ENCODE measurements at regions of chrX and their contacts with region 1.

Region 1: DNA sequence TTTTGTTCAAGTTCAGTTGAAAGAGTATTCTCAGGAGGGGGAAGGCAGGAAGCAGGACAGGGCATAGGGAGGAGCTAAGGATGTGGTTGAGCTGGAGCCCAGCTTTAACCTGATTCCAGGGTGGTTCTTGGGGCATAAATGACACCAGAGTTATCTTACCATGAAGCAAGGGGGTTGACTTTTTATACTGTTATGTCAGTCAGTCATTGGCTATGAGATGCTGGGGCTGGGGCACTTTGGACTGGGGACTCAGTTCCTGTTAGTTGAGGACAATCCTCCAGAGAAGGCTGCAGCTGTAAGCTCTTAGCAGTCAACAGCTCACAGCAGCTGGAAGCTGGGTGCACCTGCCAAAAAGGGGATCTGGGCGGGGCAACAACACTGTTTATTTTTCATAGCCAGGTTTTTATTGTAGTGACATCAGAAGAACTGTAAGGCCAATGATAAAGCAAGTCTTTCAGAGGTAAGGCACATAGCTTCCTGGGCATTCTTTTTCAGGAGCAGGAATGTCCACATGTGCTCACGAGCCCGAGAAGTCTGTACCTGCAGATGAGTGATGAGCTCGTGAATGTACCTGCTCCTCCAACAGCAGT is 78.5 kb downstream of the MID1IP1 start:
- DNase-seq: no peak
- ATAC-seq: peak; percentile 72
- H3K4me3 ChIP-seq: no peak overlapping the region
- H3K27ac ChIP-seq: peak overlapping the region; percentile 68
- H3K4me1 ChIP-seq: peaks cover 14% of the 10 kb centered on the region
- H3K27me3 ChIP-seq: no peaks in the 10 kb centered on the region
- CTCF ChIP-seq: no peak
- EP300 ChIP-seq: no peak; a peak in 1 of 4 replicates
- POLR2A ChIP-seq: no peak
- RAD21 ChIP-seq: no peak

Region 2: DNA sequence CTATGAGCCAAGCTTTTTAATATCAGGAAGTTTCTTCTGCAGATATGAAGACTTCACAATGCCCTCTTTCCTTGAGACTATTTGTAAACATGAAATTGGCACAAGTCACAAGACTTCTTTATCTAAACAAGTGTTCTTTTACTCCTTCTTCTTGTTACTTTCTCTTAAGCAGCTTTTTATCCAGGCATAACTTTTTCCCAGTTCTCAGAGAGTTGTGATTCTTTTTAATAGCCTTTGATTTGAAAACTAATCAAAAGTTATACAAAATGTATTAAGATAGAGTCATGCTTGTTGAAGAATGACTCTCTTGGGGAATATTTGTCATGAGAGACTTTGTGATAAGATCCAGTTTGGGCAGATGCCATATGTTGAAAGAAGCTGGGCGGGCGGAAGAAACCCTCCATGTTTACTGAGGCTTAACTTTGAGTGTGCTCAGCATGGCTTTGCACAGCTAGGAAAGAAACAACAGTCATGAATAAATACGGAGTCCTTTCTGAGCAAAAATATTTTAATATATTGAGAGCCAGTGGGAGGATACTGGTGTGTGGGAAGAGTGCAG is 834.1 kb before region 1 on chrX:
- CTCF ChIA-PET with region 1: no interaction called
- POLR2A ChIA-PET with region 1: no interaction called
- RAD21 ChIA-PET with region 1: no interaction called
- SMC1A ChIA-PET with region 1: no interaction called
- in situ Hi-C with region 1: no loop called
- intact Hi-C with region 1: no loop called
- DNase-seq: no peak
- ATAC-seq: no peak
- H3K4me3 ChIP-seq: no peak overlapping the region
- H3K27ac ChIP-seq: no peak overlapping the region
- H3K4me1 ChIP-seq: no peaks in the 10 kb centered on the region
- H3K27me3 ChIP-seq: no peaks in the 10 kb centered on the region
- CTCF ChIP-seq: no peak
- EP300 ChIP-seq: no peak
- POLR2A ChIP-seq: no peak
- RAD21 ChIP-seq: no peak

Region 3: GRCh38 chrX:38803586-38804431 is 75.9 kb before region 1 on chrX:
- CTCF ChIA-PET with region 1: interaction called, 10 read pairs
- POLR2A ChIA-PET with region 1: interaction called, 12 read pairs
- RAD21 ChIA-PET with region 1: interaction called, 16 read pairs
- SMC1A ChIA-PET with region 1: interaction called, 39 read pairs
- in situ Hi-C with region 1: no loop called
- intact Hi-C with region 1: loop called (anchors 1 kb)
- DNase-seq: no peak
- ATAC-seq: peak; percentile 78
- H3K4me3 ChIP-seq: peak overlapping the region; percentile 70
- H3K27ac ChIP-seq: peak overlapping the region; percentile 82
- H3K4me1 ChIP-seq: no peaks in the 10 kb centered on the region
- H3K27me3 ChIP-seq: no peaks in the 10 kb centered on the region
- CTCF ChIP-seq: no peak
- EP300 ChIP-seq: no peak
- POLR2A ChIP-seq: peak; percentile 84; the same call in 1 of the 2 replicates
- RAD21 ChIP-seq: no peak

Region 4: GRCh38 chrX:38864165-38864564 is 15.6 kb before region 1 on chrX:
- CTCF ChIA-PET with region 1: interaction called, 6 read pairs
- POLR2A ChIA-PET with region 1: interaction called, 4 read pairs
- RAD21 ChIA-PET with region 1: interaction called, 9 read pairs
- SMC1A ChIA-PET with region 1: interaction called, 13 read pairs
- in situ Hi-C with region 1: no loop called
- intact Hi-C with region 1: no loop called
- DNase-seq: no peak
- ATAC-seq: no peak
- H3K4me3 ChIP-seq: no peak overlapping the region
- H3K27ac ChIP-seq: no peak overlapping the region
- H3K4me1 ChIP-seq: no peaks in the 10 kb centered on the region
- H3K27me3 ChIP-seq: no peaks in the 10 kb centered on the region
- CTCF ChIP-seq: no peak
- EP300 ChIP-seq: no peak
- POLR2A ChIP-seq: no peak
- RAD21 ChIP-seq: no peak

Region 5: GRCh38 chrX:38898261-38898660 is 18.5 kb after region 1 on chrX:
- CTCF ChIA-PET with region 1: interaction called, 12 read pairs
- POLR2A ChIA-PET with region 1: interaction called, 7 read pairs
- RAD21 ChIA-PET with region 1: interaction called, 10 read pairs
- SMC1A ChIA-PET with region 1: interaction called, 16 read pairs
- in situ Hi-C with region 1: no loop called
- intact Hi-C with region 1: no loop called
- DNase-seq: no peak
- ATAC-seq: peak; percentile 24; the same call in 2 of the 3 replicates
- H3K4me3 ChIP-seq: no peak overlapping the region
- H3K27ac ChIP-seq: peak overlapping the region; percentile 54
- H3K4me1 ChIP-seq: peaks cover 16% of the 10 kb centered on the region
- H3K27me3 ChIP-seq: no peaks in the 10 kb centered on the region
- CTCF ChIP-seq: no peak
- EP300 ChIP-seq: no peak
- POLR2A ChIP-seq: no peak
- RAD21 ChIP-seq: no peak

Region 6: DNA sequence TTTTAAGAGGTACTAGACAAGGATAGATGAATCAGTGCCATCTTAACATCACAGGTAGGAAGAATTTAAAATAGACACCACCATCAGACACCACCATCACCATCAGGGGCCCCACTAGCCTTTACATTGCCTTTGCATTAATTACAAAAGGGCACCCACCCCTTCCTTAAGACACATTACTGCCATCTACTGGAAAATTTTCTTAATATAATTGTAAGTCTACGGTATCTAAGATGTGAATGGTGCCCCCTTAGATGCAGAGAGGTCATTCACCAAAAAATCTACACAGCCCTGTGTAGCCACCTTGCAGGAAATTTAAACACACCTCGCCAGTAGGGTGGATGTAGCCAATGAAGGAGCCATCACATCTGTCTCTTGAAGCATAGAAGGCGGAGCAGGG is 105.6 kb after region 1 on chrX:
- CTCF ChIA-PET with region 1: interaction called, 6 read pairs
- POLR2A ChIA-PET with region 1: interaction called, 3 read pairs
- RAD21 ChIA-PET with region 1: interaction called, 19 read pairs
- SMC1A ChIA-PET with region 1: interaction called, 20 read pairs
- in situ Hi-C with region 1: no loop called
- intact Hi-C with region 1: loop called (anchors 1 kb)
- DNase-seq: no peak
- ATAC-seq: peak; percentile 84
- H3K4me3 ChIP-seq: no peak overlapping the region
- H3K27ac ChIP-seq: no peak overlapping the region
- H3K4me1 ChIP-seq: no peaks in the 10 kb centered on the region
- H3K27me3 ChIP-seq: no peaks in the 10 kb centered on the region
- CTCF ChIP-seq: peak in 2 of 3 experiments; percentile 15 to 22; a peak in 1 of 6 replicates
- EP300 ChIP-seq: no peak
- POLR2A ChIP-seq: no peak
- RAD21 ChIP-seq: peak; percentile 59